Calu3 (cell line): ENCODE measurements at regions of chr1 and their contacts with region 1.

Region 1: DNA sequence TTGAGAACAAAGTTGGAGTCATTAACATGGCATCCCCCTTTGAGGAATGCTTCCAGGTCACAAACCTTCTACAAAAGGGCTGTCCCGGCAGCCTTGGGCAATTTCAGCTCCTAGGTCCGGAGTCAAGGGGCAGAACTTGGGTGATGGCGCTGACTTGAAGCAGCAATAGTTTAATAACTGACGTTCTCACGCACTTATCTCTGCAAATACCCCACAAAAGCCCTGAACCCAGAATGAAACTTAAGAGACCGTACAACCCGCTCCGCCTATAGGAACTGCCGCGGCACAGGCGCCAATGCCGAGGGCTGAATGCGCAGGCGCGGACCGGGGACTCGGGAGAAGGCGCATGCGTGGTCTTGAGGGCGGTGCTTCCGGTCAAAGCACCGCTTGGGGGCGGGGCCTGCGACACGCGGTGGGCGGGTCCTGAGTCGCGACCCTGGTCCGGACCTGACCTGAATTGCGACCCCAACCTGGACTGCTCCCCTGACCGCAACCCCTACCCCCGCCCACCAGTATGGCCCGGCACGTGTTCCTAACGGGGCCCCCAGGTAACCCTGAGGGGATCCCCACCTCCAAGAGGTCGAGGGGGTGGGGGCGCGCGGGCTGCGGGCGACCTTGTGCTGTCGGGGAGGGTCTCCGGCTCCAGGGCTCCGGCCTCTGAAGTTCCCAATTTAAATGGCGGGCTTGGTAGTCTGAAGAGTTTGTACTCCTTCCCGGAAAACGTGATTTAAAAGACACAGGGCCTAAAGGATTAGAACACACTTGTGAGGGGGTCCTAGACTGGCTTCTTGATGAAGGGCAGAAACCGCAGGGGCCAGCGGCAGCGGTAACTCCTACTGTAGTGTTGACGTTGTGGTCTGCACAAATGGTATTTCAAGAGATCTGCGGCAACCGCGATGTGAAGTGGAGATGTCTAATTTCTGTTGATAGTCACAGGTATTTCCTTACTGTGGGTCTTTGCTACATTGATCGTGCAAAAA is at the start of gene NTPCR:
- DNase-seq: peak; percentile 98
- H3K4me3 Mint-ChIP-seq: peak within 1 kb of the TSS; percentile 91
- H3K27ac Mint-ChIP-seq: peak within 1 kb of the TSS; percentile 77
- H3K4me1 Mint-ChIP-seq: peaks cover 23% of the 10 kb centered on the region
- H3K27me3 Mint-ChIP-seq: peaks cover 11% of the 10 kb centered on the region
- CTCF ChIP-seq: no peak
- total RNA-seq, gene NTPCR: 38.2 and 39.2 TPM in 2 replicates

Region 2: GRCh38 chr1:232635778-232636356 is 314.6 kb before region 1 on chr1:
- CTCF ChIA-PET with region 1: no interaction called
- intact Hi-C with region 1: loop called (anchors 2 kb)
- DNase-seq: no peak
- H3K4me3 Mint-ChIP-seq: no peak overlapping the region
- H3K27ac Mint-ChIP-seq: no peak overlapping the region
- H3K4me1 Mint-ChIP-seq: no peaks in the 10 kb centered on the region
- H3K27me3 Mint-ChIP-seq: peaks cover 24% of the 10 kb centered on the region
- CTCF ChIP-seq: no peak

Region 3: GRCh38 chr1:232805269-232806185 is 145.0 kb before region 1 on chr1 and contains the start of gene MAP10:
- CTCF ChIA-PET with region 1: no interaction called
- intact Hi-C with region 1: loop called (anchors 5 kb)
- DNase-seq: peak; percentile 76
- H3K4me3 Mint-ChIP-seq: peak within 1 kb of the TSS; percentile 77
- H3K27ac Mint-ChIP-seq: peak within 1 kb of the TSS; percentile 59
- H3K4me1 Mint-ChIP-seq: peaks cover 18% of the 10 kb centered on the region
- H3K27me3 Mint-ChIP-seq: no peaks in the 10 kb centered on the region
- CTCF ChIP-seq: no peak
- total RNA-seq, gene MAP10: 1.5 and 1.9 TPM in 2 replicates

Region 4: GRCh38 chr1:233005703-233006102 is 55.2 kb after region 1 on chr1:
- CTCF ChIA-PET with region 1: no interaction called
- intact Hi-C with region 1: no loop called
- DNase-seq: no peak
- H3K4me3 Mint-ChIP-seq: no peak overlapping the region
- H3K27ac Mint-ChIP-seq: no peak overlapping the region
- H3K4me1 Mint-ChIP-seq: no peaks in the 10 kb centered on the region
- H3K27me3 Mint-ChIP-seq: no peaks in the 10 kb centered on the region
- CTCF ChIP-seq: no peak

Region 5: DNA sequence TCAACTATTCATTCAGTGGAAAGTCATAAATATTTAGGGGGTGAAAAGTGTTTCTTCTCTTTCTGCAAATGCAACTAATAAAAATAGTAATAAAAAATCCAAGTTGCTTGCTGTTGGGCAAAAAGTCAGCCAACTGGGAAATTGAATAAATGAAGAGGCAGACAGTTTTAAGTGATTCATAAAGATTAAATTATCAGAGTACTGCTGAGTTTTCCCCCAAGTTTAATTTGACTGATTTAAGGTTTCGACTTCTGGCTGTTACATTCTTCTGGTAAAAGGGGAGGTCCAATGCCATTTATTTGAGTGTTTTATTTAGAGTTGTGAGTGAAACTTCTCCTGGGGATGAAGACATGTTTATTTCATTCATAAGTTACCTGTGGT is 125.4 kb after region 1 on chr1:
- CTCF ChIA-PET with region 1: no interaction called
- intact Hi-C with region 1: no loop called
- DNase-seq: no peak
- H3K4me3 Mint-ChIP-seq: no peak overlapping the region
- H3K27ac Mint-ChIP-seq: no peak overlapping the region
- H3K4me1 Mint-ChIP-seq: peaks cover 11% of the 10 kb centered on the region
- H3K27me3 Mint-ChIP-seq: no peaks in the 10 kb centered on the region
- CTCF ChIP-seq: no peak

Region 6: GRCh38 chr1:233188061-233188460 is 237.6 kb after region 1 on chr1:
- CTCF ChIA-PET with region 1: no interaction called
- intact Hi-C with region 1: no loop called
- DNase-seq: no peak
- H3K4me3 Mint-ChIP-seq: no peak overlapping the region
- H3K27ac Mint-ChIP-seq: no peak overlapping the region
- H3K4me1 Mint-ChIP-seq: no peaks in the 10 kb centered on the region
- H3K27me3 Mint-ChIP-seq: no peaks in the 10 kb centered on the region
- CTCF ChIP-seq: no peak